ENCODE measurements at regions of chr3 and their contacts with region 1.

Region 1: DNA sequence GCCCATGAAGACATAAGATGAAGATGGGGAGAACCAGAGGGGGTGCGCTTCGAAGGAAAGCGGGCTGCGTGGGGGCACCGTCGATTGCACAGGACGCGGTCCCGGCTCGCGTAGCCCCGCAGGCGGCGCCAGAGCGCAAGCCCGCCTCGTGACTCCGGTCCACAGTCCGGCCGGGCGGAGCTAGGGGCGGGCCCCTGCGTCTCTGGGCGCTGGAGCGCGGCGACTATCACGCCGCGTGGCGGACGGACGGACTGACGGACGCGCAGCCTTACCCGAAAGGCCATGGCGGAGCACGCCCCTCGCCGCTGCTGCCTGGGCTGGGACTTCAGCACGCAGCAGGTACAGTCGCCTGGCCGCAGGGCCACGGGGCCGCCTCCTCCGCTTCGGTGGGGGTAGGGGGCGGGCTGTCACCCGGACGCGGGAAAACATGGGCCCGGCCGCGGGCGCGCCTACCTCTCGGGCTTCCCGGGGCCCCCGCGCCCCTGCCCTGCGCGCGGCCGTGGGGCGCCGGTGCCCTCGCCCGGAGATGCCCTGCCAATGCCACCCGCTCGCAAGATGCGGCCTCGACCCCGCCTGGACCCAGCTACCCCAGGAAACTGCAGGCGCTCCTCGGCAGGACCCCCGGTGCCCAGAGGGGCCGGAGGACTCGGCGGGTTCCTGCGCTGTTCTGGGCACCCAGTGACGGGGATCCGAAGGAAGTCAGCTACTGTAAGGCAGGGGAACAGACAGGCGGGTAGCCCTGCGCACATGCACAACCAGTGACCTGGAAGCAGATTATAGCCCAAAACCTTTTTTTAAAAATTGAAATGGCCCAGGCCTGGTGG is at the start of gene XYLB:
- DNase-seq: no peak
- H3K4me3 ChIP-seq: peak within 1 kb of the TSS; percentile 84
- CTCF ChIP-seq: peak; percentile 94

Region 2: GRCh38 chr3:38117748-38118420 is 228.9 kb before region 1 on chr3:
- CTCF ChIA-PET with region 1: interaction called, 21 read pairs
- POLR2A ChIA-PET with region 1: no interaction called
- DNase-seq: no peak
- H3K4me3 ChIP-seq: no peak overlapping the region
- CTCF ChIP-seq: peak; percentile 84

Region 3: GRCh38 chr3:38297947-38298711 is 48.7 kb before region 1 on chr3:
- CTCF ChIA-PET with region 1: interaction called, 13 read pairs
- POLR2A ChIA-PET with region 1: no interaction called
- DNase-seq: no peak
- H3K4me3 ChIP-seq: no peak overlapping the region
- CTCF ChIP-seq: peak; percentile 20

Region 4: GRCh38 chr3:38334142-38335055 is 12.4 kb before region 1 on chr3:
- CTCF ChIA-PET with region 1: interaction called, 42 read pairs
- POLR2A ChIA-PET with region 1: no interaction called
- DNase-seq: peak; percentile 33
- H3K4me3 ChIP-seq: no peak overlapping the region
- CTCF ChIP-seq: no peak

Region 5: GRCh38 chr3:38473229-38473628 is 126.4 kb after region 1 on chr3:
- CTCF ChIA-PET with region 1: interaction called, 95 read pairs
- POLR2A ChIA-PET with region 1: no interaction called
- DNase-seq: no peak
- H3K4me3 ChIP-seq: no peak overlapping the region
- CTCF ChIP-seq: no peak

Region 6: GRCh38 chr3:38528457-38528856 is 181.7 kb after region 1 on chr3:
- CTCF ChIA-PET with region 1: no interaction called
- POLR2A ChIA-PET with region 1: no interaction called
- DNase-seq: no peak
- H3K4me3 ChIP-seq: no peak overlapping the region
- CTCF ChIP-seq: no peak

Measured in AG04449 (cell line).